ENCODE measurements at regions of chr5 and their contacts with region 1.

Region 1: DNA sequence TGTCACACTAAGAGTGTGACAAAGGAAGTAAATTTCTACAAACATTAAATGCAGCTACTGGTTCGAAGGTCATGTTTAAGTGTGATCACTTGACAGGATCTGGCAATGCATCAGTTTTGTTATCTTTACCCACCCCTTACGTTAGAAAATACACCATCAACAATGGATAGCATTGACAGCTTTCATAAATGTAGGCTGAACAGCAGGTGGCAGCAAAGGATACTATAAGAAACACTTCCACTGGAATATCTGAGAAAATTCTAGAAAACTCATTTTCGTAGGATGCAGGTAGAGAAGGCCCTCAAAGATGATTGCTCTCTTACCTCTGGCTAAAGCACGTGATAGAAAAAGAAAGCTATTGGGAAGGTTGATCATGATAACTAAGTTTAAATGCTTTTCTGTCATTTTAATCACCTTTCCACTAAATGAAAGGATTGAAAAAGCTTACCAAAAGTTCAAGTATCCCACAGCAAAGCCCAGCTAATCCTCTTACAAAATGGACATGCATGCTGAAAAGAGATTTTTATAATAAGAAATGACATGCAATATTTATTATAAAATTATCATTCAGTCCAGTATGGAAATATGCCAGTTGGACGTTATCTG is 292.5 kb downstream of the PARP8 start:
- DNase-seq: no peak

Region 2: GRCh38 chr5:50889778-50890177 is 69.2 kb before region 1 on chr5:
- intact Hi-C with region 1: no loop called
- DNase-seq: no peak

Region 3: GRCh38 chr5:50934343-50934742 is 24.6 kb before region 1 on chr5:
- intact Hi-C with region 1: no loop called
- DNase-seq: no peak

Region 4: GRCh38 chr5:52007230-52007858 is 1048.4 kb after region 1 on chr5:
- intact Hi-C with region 1: loop called (anchors 2 kb)
- DNase-seq: no peak

Region 5: DNA sequence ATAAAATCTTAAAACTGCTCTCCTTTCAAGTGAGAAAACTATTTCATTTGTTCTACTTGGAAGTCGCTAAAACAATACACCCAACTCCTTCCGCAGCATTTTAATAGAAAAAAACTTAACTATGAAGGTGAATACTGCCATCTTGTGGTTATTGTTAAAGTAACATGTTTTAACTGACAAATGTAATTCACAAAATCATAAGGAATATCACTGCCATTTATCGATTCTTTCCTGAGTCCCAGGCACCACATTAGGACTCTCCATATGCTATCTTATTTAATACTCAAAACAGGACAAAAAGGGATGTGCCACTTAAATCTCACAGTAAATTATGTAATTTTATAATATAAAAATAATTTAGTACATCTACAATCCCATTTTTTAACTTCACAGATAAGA is 1698.3 kb after region 1 on chr5:
- intact Hi-C with region 1: loop called (anchors 5 kb)
- DNase-seq: no peak